ENCODE measurements at regions of chr20 and their contacts with region 1.

Region 1: DNA sequence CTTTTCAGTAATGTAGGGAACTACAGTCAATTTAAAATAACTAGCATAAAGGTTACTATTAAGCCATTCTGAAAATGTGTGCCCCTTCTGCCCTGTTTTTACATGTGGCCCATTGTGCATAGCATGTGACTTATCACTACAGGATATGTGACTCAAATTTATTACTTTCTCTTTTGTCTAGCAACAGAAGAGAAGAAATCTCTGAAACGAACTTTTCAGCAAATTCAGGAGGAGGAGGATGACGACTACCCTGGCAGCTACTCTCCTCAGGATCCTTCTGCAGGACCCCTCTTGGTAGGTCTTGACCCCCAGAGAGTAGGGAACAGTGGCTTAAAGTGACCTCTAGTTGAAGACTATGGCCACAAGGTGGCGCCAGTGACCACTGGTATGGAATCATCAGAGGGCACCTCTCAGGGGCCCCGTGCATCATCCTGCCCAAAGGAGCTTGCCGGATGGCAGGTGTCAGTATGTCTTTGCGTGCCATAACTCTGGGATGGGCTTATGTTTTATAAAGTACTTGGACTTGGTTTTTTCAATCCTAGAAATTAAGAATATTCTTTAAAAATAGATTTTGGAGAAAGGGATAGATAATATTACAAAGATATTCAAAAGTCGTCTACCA is 23.9 kb downstream of the RPRD1B start:
- DNase-seq: peak; percentile 90 to 94
- H3K4me3 ChIP-seq: no peak overlapping the region
- H3K4me3 Mint-ChIP-seq: no peak overlapping the region
- H3K27ac Mint-ChIP-seq: no peak overlapping the region
- H3K4me1 ChIP-seq: peaks cover 21% of the 10 kb centered on the region
- H3K4me1 Mint-ChIP-seq: peaks cover 13% of the 10 kb centered on the region
- H3K27me3 ChIP-seq: no peaks in the 10 kb centered on the region
- H3K27me3 Mint-ChIP-seq: no peaks in the 10 kb centered on the region
- CTCF ChIP-seq: peak; percentile 98 to 100

Region 2: DNA sequence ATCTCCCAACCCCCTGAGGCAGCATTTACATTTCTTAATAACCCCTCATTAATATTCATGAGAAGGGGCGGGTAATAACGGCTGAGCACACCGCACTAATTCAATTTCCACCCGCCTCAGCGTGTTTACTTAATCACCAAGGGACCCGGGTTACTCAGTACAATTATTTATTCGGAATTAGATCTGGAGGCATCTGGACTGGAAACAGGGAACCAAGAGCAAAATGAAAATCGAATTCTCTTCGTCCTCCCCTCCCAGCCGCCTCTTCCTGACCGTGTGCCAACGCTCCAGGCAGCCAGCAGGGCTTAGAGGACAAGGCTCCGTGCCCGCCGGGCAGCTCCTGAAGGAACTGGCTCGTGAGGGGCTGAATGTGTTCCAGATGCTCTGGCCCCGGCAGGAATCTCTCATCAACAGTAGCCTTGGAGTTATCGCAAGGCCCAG is 387.1 kb before region 1 on chr20:
- CTCF ChIA-PET with region 1: no interaction called
- POLR2A ChIA-PET with region 1: no interaction called
- intact Hi-C with region 1: no loop called
- DNase-seq: no peak
- H3K4me3 ChIP-seq: no peak overlapping the region
- H3K4me3 Mint-ChIP-seq: no peak overlapping the region
- H3K27ac Mint-ChIP-seq: no peak overlapping the region
- H3K4me1 ChIP-seq: peaks cover 27% of the 10 kb centered on the region
- H3K4me1 Mint-ChIP-seq: peaks cover 25% of the 10 kb centered on the region
- H3K27me3 ChIP-seq: no peaks in the 10 kb centered on the region
- H3K27me3 Mint-ChIP-seq: no peaks in the 10 kb centered on the region
- CTCF ChIP-seq: no peak

Region 3: GRCh38 chr20:37693635-37694626 is 363.5 kb before region 1 on chr20 and contains the start of gene CTNNBL1:
- CTCF ChIA-PET with region 1: no interaction called
- POLR2A ChIA-PET with region 1: no interaction called
- intact Hi-C with region 1: no loop called
- DNase-seq: peak; percentile 100
- H3K4me3 ChIP-seq: peak within 1 kb of the TSS; percentile 53
- H3K4me3 Mint-ChIP-seq: peak within 1 kb of the TSS; percentile 92
- H3K27ac Mint-ChIP-seq: peak within 1 kb of the TSS; percentile 86
- H3K4me1 ChIP-seq: peaks cover 11% of the 10 kb centered on the region
- H3K4me1 Mint-ChIP-seq: peaks cover 5% of the 10 kb centered on the region
- H3K27me3 ChIP-seq: no peaks in the 10 kb centered on the region
- H3K27me3 Mint-ChIP-seq: peaks cover 3% of the 10 kb centered on the region
- CTCF ChIP-seq: no peak
- total RNA-seq, gene CTNNBL1: 203 and 204 TPM in 2 replicates

Region 4: DNA sequence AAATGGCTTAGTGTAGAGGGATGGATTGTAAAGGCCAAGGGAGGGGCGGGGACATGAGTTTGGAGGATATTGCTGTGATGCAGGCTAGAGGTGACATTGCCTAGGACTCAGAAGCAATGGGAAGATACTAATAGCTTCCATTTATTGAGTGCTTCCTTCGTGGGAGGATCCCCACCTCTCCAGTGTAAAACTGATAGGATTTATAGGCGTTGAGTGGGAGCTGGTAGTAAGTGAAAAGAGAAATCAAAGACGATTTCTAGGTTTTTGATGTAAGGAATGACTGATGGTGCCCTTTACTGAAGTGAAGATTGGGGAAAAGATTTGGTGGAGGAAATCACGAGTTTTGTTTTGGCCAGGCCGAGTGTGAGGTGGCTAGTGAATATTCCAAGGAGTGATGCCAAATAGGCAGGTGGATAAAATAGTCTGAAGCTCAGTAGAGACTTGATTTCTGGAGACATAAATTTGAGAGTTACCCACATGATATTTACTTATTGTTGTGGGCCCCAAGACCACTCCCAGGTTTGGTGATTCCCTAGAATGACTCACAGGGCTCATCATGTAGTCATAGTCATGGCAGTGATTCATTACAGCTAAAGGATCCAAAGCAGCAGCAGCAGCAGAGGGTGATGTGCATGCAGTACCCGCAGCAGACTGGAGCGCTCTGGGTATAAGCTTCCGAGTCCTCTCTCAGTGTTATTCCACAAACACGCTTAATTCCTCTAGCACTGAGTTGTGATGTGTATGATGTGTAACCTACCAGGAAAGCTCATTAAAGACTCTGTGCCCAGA is 13.8 kb before region 1 on chr20:
- CTCF ChIA-PET with region 1: interaction called, 14 read pairs
- POLR2A ChIA-PET with region 1: no interaction called
- intact Hi-C with region 1: no loop called
- DNase-seq: no peak
- H3K4me3 ChIP-seq: no peak overlapping the region
- H3K4me3 Mint-ChIP-seq: no peak overlapping the region
- H3K27ac Mint-ChIP-seq: no peak overlapping the region
- H3K4me1 ChIP-seq: 0 out of 2 replicates have a peak, but pooled peaks cover 8% of the 10 kb centered on the region
- H3K4me1 Mint-ChIP-seq: peaks cover 23% of the 10 kb centered on the region
- H3K27me3 ChIP-seq: no peaks in the 10 kb centered on the region
- H3K27me3 Mint-ChIP-seq: no peaks in the 10 kb centered on the region
- CTCF ChIP-seq: no peak

Region 5: GRCh38 chr20:38094373-38094891 is 37.0 kb after region 1 on chr20:
- CTCF ChIA-PET with region 1: interaction called, 10 read pairs
- POLR2A ChIA-PET with region 1: no interaction called
- intact Hi-C with region 1: no loop called
- DNase-seq: no peak
- H3K4me3 ChIP-seq: no peak overlapping the region
- H3K4me3 Mint-ChIP-seq: no peak overlapping the region
- H3K27ac Mint-ChIP-seq: peak overlapping the region; percentile 20
- H3K4me1 ChIP-seq: peaks cover 8% of the 10 kb centered on the region; the same call in 1 of the 2 replicates
- H3K4me1 Mint-ChIP-seq: peaks cover 8% of the 10 kb centered on the region
- H3K27me3 ChIP-seq: no peaks in the 10 kb centered on the region
- H3K27me3 Mint-ChIP-seq: no peaks in the 10 kb centered on the region
- CTCF ChIP-seq: no peak

Region 6: DNA sequence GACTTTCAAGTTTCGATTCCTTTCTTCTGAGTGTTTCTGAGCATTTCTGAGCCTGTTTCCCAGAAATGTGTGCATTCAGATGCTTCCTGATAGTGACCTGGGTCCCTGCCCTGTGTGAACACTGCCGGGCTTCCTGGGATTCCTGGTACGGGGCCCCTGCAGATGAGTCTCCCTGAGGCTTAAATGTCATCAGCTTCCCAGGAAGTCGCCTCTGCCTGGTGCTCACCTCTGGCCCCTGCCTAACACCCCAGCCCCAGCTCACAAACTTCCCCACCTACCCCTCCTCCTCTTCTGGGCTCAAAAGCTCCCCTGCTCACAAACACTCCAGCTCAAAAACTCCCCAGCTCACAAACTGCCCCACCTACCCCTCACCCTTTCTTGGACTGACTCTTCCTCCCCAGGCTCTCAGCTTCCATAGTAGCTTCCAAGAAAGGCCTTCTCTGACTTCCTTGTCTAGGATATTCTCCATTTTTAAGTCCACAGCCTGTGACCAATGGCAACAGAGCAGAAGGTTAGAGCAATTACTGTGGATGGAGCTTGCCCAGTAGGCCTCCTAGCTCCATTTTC is 65.6 kb after region 1 on chr20:
- CTCF ChIA-PET with region 1: interaction called, 9 read pairs
- POLR2A ChIA-PET with region 1: interaction called, 14 read pairs
- intact Hi-C with region 1: no loop called
- DNase-seq: peak; percentile 96 to 98
- H3K4me3 ChIP-seq: no peak overlapping the region
- H3K4me3 Mint-ChIP-seq: peak overlapping the region; percentile 50
- H3K27ac Mint-ChIP-seq: peak overlapping the region; percentile 99
- H3K4me1 ChIP-seq: peaks cover 34% of the 10 kb centered on the region
- H3K4me1 Mint-ChIP-seq: peaks cover 42% of the 10 kb centered on the region
- H3K27me3 ChIP-seq: no peaks in the 10 kb centered on the region
- H3K27me3 Mint-ChIP-seq: no peaks in the 10 kb centered on the region
- CTCF ChIP-seq: no peak

Region 7: GRCh38 chr20:38165089-38165989 is 107.9 kb after region 1 on chr20 and contains the start of gene TGM2:
- CTCF ChIA-PET with region 1: interaction called, 8 read pairs
- POLR2A ChIA-PET with region 1: no interaction called
- intact Hi-C with region 1: loop called (anchors 1 kb)
- DNase-seq: peak; percentile 94 to 98
- H3K4me3 ChIP-seq: peak within 1 kb of the TSS; percentile 44
- H3K4me3 Mint-ChIP-seq: peak within 1 kb of the TSS; percentile 67
- H3K27ac Mint-ChIP-seq: peak within 1 kb of the TSS; percentile 6
- H3K4me1 ChIP-seq: peaks cover 38% of the 10 kb centered on the region
- H3K4me1 Mint-ChIP-seq: peaks cover 21% of the 10 kb centered on the region
- H3K27me3 ChIP-seq: no peaks in the 10 kb centered on the region
- H3K27me3 Mint-ChIP-seq: no peaks in the 10 kb centered on the region
- CTCF ChIP-seq: peak; percentile 97 to 98
- total RNA-seq, gene TGM2: 138 and 162 TPM in 2 replicates

Region 8: DNA sequence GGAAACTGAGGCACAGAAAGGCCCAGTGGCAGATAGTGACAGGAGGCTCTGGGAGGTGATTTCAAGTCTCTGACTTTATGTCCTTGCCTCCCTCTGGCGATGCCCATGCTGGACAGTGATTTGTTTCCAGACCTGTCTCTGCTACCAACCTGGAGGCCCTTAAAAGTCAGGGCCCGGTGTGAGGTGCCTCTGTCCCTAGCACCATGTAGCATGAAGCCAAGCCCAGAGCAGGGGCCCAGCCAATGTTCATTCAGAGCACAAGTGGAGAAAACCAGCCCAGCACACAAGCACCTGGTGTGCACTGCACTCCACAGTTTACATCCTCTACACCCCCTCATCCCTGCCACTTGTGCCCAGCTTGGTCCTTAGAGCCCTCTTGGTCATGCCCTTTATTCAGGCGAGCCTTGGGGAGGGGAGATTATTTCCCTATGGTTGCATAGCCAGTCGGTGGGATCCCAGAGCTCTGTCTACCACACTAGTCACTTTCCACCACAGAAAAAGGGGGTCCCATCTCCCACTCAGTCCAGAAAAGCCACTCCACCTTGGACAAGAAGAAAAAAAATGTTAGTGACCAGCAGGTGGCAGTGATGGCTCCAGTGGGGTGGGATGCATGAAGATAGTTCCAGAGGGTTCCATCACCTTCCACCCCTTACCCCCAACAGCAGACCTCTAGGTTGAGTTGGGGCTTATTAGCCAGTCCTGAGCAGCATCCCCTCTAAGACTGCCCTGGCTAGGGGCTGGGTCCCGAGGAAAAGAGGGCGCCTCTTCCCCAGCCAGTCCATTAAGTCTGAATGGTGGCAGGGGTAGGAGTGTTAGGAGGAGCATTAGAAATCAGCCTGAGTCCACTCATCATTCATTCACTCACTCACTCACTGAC is 172.2 kb after region 1 on chr20:
- CTCF ChIA-PET with region 1: interaction called, 17 read pairs
- POLR2A ChIA-PET with region 1: no interaction called
- intact Hi-C with region 1: no loop called
- DNase-seq: peak in 1 of 2 experiments; percentile 65
- H3K4me3 ChIP-seq: no peak overlapping the region
- H3K4me3 Mint-ChIP-seq: no peak overlapping the region
- H3K27ac Mint-ChIP-seq: no peak overlapping the region
- H3K4me1 ChIP-seq: no peaks in the 10 kb centered on the region
- H3K4me1 Mint-ChIP-seq: no peaks in the 10 kb centered on the region
- H3K27me3 ChIP-seq: no peaks in the 10 kb centered on the region
- H3K27me3 Mint-ChIP-seq: peaks cover 2% of the 10 kb centered on the region
- CTCF ChIP-seq: peak; percentile 63 to 65

Region 9: GRCh38 chr20:38275815-38276550 is 218.5 kb after region 1 on chr20:
- CTCF ChIA-PET with region 1: no interaction called
- POLR2A ChIA-PET with region 1: no interaction called
- intact Hi-C with region 1: no loop called
- DNase-seq: peak in 1 of 2 experiments; percentile 30
- H3K4me3 ChIP-seq: no peak overlapping the region
- H3K4me3 Mint-ChIP-seq: no peak overlapping the region
- H3K27ac Mint-ChIP-seq: no peak overlapping the region
- H3K4me1 ChIP-seq: no peaks in the 10 kb centered on the region
- H3K4me1 Mint-ChIP-seq: no peaks in the 10 kb centered on the region
- H3K27me3 ChIP-seq: no peaks in the 10 kb centered on the region
- H3K27me3 Mint-ChIP-seq: no peaks in the 10 kb centered on the region
- CTCF ChIP-seq: no peak

Region 10: DNA sequence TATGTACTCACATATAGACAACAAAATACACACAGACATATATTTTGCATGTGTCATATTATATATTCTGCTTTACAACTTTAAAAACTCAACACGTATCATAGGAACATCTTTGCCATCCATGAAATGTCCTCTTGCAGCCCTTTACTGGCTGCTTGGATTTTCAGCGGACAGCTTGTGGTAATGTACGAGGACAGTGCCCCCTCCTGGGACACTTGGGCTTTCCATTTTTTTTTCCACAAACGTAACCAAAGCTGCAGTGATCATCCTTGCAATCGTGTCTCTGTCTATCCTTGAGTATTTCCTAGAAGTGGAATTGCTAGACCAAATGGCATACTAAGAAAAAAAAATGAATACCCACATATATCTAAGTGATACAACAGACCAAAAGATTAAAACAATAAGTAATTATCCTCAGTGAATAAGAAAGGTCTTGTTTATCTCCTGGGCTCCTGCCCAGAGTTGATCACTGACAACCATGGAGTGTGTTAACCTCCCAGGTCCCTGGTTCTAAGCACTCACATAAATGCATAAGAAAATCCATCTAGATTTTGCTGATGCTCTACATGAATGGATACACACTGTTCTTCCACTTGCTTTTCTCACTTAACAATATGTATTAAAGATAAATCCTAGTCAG is 264.6 kb after region 1 on chr20:
- CTCF ChIA-PET with region 1: interaction called, 5 read pairs
- POLR2A ChIA-PET with region 1: no interaction called
- intact Hi-C with region 1: loop called (anchors 2 kb)
- DNase-seq: peak in 1 of 2 experiments; percentile 76
- H3K4me3 ChIP-seq: no peak overlapping the region
- H3K4me3 Mint-ChIP-seq: no peak overlapping the region
- H3K27ac Mint-ChIP-seq: no peak overlapping the region
- H3K4me1 ChIP-seq: no peaks in the 10 kb centered on the region
- H3K4me1 Mint-ChIP-seq: peaks cover 5% of the 10 kb centered on the region
- H3K27me3 ChIP-seq: no peaks in the 10 kb centered on the region
- H3K27me3 Mint-ChIP-seq: peaks cover 25% of the 10 kb centered on the region
- CTCF ChIP-seq: peak; percentile 93 to 97

Measured in Caco-2 (cell line).